Activated CD4-positive, alpha-beta T cell treated with anti-CD3 and anti-CD28 coated beads for 36 hours (primary cell): ENCODE measurements at regions of chr9 and their contacts with region 1.

Region 1: DNA sequence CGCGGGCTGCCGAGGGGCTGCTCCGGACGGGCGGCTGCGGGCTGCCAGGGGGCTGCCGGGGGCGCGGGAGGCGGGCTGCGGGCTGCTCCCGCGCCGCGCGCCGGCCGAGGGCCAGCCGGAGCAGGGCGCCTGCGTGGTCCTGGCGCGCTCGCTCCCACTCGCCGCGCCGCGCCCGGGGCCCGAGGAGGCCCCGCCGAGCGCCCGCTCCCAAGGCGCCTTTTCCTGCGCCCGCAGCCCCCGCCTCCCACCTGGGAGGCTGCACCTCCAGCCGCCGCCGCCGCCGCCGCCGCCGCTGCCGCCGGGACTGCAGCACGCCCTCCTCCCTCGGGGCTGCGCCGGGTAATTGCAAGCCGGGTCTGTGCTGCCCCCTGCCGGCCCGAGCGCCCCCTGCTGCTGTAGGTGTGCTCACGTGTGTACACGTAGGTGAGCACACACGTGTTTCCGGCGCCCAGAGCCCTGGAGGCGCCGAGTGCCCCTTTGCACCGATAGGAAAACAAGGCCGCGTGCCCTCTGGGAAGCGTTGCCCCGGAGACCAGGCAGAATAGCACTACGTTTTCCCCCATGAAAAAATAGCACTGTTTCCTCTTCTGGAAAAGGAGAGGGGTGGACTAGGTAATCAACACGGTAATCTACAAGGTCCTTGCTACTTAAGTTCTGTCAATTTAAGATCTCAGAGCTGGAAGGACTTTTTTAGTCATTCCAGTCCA is at the start of gene EPB41L4B:
- DNase-seq: peak; percentile 96
- ATAC-seq: peak; percentile 99
- H3K4me3 Mint-ChIP-seq: peak within 1 kb of the TSS; percentile 61
- H3K27ac Mint-ChIP-seq: no peak within 1 kb of the TSS
- H3K4me1 Mint-ChIP-seq: peaks cover 13% of the 10 kb centered on the region
- H3K27me3 Mint-ChIP-seq: peaks cover 45% of the 10 kb centered on the region
- total RNA-seq, gene EPB41L4B: 0.23 to 0.33 TPM

Region 2: DNA sequence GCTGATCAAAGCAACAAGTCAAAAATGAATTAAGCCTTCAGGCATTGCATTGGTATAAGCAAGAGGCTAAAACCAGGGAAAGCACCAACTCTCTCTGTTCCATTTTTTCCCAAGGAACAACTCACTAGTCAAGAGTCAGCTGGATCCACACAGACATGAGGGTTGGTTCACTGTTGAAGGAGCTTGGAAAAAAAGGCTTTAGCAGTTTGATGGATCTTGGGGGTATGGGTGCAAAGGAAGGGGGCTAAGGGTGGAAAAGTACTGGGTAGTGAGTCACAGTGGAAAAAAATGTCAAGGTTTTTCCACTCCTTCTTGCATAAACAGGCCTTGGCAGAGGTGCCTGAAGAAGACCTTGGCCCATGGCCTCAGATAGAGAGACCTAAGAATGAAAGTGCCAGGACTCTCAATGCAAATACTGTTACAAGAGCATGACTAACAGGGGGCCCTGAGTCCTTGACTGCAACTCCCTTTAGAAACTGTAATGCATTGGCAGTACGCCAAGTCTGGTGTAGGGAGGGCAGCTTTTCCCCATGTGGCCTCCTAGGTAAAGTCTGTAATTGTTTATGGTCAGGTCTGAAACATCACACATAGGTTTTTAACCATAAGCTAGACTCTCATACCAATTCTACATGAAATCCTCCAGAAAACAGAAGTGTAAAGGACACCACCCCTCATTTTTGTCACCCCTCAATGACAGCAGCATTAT is 435.1 kb before region 1 on chr9:
- CTCF ChIA-PET with region 1: no interaction called
- POLR2A ChIA-PET with region 1: no interaction called
- intact Hi-C with region 1: loop called in 1 of 2 experiments (anchors 1 kb)
- DNase-seq: peak; percentile 81
- ATAC-seq: peak; percentile 100
- H3K4me3 Mint-ChIP-seq: peak overlapping the region; percentile 50
- H3K27ac Mint-ChIP-seq: peak overlapping the region; percentile 77
- H3K4me1 Mint-ChIP-seq: peaks cover 20% of the 10 kb centered on the region
- H3K27me3 Mint-ChIP-seq: no peaks in the 10 kb centered on the region

Region 3: GRCh38 chr9:109129470-109130197 is 191.3 kb before region 1 on chr9:
- CTCF ChIA-PET with region 1: no interaction called
- POLR2A ChIA-PET with region 1: no interaction called
- intact Hi-C with region 1: no loop called
- DNase-seq: no peak
- ATAC-seq: no peak
- H3K4me3 Mint-ChIP-seq: no peak overlapping the region
- H3K27ac Mint-ChIP-seq: no peak overlapping the region
- H3K4me1 Mint-ChIP-seq: no peaks in the 10 kb centered on the region
- H3K27me3 Mint-ChIP-seq: no peaks in the 10 kb centered on the region

Region 4: DNA sequence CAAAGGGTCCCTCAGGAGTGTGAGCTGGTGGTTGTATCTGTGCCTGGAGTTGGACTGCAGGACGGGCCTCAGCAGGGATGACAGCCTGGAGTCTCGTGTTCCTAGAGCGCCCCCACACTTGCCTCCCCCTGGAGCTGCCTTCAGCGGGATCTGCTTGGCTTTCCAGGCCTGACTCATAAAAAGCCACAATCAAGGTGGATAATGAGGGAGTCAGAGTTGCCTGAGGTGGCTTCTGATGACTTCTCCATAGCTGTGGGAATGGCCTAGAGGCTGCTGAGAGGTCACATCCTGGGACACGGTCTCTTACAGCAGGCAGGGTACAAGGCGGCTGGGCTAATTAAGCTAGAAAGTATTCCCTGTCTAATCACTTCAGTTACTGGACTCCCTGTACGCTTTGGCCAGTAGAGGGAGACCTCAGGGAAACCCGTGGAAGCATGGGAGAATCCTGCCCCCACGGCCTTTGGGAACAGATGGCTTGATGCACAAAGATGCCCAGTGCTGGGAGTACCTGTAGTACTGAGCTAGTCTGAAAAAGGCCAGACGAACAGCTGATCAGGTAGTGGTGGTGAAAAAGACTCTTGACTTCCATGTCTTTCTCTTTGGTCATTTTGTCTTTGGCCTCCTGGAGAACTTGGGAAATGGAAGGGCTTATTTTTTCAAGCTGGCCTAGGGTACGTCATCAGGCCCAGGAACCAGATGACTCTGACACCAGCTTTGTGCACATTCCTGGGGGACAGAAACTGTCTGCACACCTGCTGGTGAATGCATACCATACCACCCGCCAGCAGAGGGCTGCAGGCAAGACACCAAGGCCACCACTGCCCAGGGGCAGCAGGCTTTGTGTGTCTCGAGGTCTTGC is 137.7 kb before region 1 on chr9:
- CTCF ChIA-PET with region 1: no interaction called
- POLR2A ChIA-PET with region 1: no interaction called
- intact Hi-C with region 1: loop called in 1 of 2 experiments (anchors 1 kb)
- DNase-seq: peak; percentile 48
- ATAC-seq: no peak
- H3K4me3 Mint-ChIP-seq: no peak overlapping the region
- H3K27ac Mint-ChIP-seq: no peak overlapping the region
- H3K4me1 Mint-ChIP-seq: peaks cover 13% of the 10 kb centered on the region
- H3K27me3 Mint-ChIP-seq: peaks cover 14% of the 10 kb centered on the region

Region 5: DNA sequence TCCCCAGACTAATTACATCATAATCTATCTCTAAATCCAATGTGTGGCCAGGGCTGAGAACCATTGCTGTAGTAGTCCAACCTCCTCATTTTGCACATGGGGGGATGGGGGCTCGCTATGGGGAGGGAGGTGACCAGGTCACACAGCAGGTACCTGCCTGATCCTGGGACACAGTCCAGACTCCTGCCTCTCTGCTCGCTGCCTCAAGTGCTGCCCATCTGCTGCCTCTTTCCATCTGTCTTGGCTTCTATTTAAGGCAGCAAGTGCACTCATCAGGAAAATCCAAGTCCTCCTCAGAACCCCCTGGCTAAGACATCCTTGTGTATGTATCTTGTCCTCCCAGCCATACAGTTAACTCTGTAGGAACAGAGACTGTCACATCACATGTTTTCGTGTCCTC is 96.1 kb before region 1 on chr9:
- CTCF ChIA-PET with region 1: no interaction called
- POLR2A ChIA-PET with region 1: no interaction called
- intact Hi-C with region 1: no loop called
- DNase-seq: no peak
- ATAC-seq: no peak
- H3K4me3 Mint-ChIP-seq: no peak overlapping the region
- H3K27ac Mint-ChIP-seq: no peak overlapping the region
- H3K4me1 Mint-ChIP-seq: no peaks in the 10 kb centered on the region
- H3K27me3 Mint-ChIP-seq: peaks cover 10% of the 10 kb centered on the region

Region 6: GRCh38 chr9:109411798-109412352 is 91.0 kb after region 1 on chr9:
- CTCF ChIA-PET with region 1: no interaction called
- POLR2A ChIA-PET with region 1: no interaction called
- intact Hi-C with region 1: loop called in 1 of 2 experiments (anchors 5 kb)
- DNase-seq: peak; percentile 66
- ATAC-seq: peak; percentile 57
- H3K4me3 Mint-ChIP-seq: no peak overlapping the region
- H3K27ac Mint-ChIP-seq: peak overlapping the region; percentile 67
- H3K4me1 Mint-ChIP-seq: peaks cover 42% of the 10 kb centered on the region
- H3K27me3 Mint-ChIP-seq: peaks cover 17% of the 10 kb centered on the region